ENCODE measurements at regions of chr3 and their contacts with region 1.

Region 1: GRCh38 chr3:51941798-51942602 is at the starts of genes PARP3 and RRP9:
- DNase-seq: peak; percentile 100
- H3K4me3 ChIP-seq: peak within 1 kb of the TSS; percentile 88
- H3K27ac ChIP-seq: peak within 1 kb of the TSS; percentile 90
- H3K27me3 ChIP-seq: no peaks in the 10 kb centered on the region
- CTCF ChIP-seq: peak; percentile 98
- polyA plus RNA-seq, gene PARP3: 7.5 and 10.4 TPM in 2 replicates
- polyA plus RNA-seq, gene RRP9: 10.8 and 13.7 TPM in 2 replicates

Region 2: DNA sequence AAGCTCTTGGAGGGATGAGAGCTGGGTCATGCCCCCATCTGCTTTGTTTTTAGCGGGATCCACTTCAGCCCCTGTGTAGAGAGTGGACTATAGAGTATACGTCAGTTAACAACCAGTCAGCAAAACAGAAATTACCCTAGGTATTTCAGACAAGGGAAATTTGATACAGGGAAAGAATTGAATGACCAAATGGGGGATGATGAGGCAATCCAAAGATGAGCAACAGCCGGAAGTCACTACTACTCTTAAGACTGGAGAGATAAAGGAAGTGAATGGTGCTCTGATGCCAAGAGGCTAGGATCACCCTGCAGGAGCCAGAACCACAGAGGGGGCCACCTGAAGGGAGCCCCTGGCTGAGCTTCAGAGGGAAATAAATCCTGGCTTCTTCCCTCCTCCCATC is 11.4 kb after region 1 on chr3:
- CTCF ChIA-PET with region 1: interaction called, 37 read pairs
- POLR2A ChIA-PET with region 1: interaction called, 4 read pairs
- DNase-seq: peak; percentile 49
- H3K4me3 ChIP-seq: no peak overlapping the region
- H3K27ac ChIP-seq: peak overlapping the region; percentile 31
- H3K27me3 ChIP-seq: no peaks in the 10 kb centered on the region
- CTCF ChIP-seq: no peak

Region 3: DNA sequence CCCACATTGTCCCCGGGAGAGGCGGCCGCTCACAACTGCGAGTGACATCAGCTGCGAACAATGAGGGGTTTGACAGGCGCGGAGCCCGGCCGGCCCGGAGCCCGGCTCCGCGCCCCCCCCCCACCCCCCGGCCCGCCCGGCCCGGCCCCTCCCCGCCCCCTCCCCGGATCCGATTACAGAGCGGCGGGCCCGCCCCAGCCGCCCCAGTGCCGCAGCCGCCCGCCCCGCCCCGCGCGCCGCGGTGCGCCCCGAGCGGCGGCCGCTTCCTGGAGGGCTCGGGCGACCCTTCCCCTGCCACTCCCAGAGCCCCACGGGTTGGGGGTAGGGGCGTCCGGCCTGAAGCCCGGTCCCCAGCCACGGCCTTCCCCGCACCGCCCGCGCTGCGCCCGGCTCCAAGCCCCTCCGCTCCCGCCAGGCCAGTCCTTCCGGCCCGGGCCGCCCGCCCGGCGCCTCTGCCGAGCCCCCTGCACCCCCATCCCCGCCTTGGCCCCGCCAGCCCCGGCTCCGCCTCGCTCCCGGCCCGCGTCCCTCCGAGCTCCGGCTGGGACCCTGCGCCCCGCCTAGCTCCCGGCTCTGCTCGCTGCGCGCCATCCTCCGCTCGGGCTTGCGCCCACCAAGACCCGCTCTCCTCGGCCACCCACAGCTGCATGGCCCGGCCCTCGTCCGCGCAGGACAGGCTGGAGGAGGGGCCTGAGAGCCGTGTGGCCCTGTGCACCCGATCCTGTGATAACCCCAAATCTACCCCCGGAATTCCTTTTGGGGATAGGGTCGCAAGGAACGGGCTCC is 25.6 kb after region 1 on chr3 and contains the start of gene PCBP4:
- CTCF ChIA-PET with region 1: interaction called, 24 read pairs
- POLR2A ChIA-PET with region 1: interaction called, 4 read pairs
- DNase-seq: no peak
- H3K4me3 ChIP-seq: peak within 1 kb of the TSS; percentile 78
- H3K27ac ChIP-seq: peak within 1 kb of the TSS; percentile 61
- H3K27me3 ChIP-seq: no peaks in the 10 kb centered on the region
- CTCF ChIP-seq: no peak
- polyA plus RNA-seq, gene PCBP4: 54.6 and 69.2 TPM in 2 replicates

Region 4: DNA sequence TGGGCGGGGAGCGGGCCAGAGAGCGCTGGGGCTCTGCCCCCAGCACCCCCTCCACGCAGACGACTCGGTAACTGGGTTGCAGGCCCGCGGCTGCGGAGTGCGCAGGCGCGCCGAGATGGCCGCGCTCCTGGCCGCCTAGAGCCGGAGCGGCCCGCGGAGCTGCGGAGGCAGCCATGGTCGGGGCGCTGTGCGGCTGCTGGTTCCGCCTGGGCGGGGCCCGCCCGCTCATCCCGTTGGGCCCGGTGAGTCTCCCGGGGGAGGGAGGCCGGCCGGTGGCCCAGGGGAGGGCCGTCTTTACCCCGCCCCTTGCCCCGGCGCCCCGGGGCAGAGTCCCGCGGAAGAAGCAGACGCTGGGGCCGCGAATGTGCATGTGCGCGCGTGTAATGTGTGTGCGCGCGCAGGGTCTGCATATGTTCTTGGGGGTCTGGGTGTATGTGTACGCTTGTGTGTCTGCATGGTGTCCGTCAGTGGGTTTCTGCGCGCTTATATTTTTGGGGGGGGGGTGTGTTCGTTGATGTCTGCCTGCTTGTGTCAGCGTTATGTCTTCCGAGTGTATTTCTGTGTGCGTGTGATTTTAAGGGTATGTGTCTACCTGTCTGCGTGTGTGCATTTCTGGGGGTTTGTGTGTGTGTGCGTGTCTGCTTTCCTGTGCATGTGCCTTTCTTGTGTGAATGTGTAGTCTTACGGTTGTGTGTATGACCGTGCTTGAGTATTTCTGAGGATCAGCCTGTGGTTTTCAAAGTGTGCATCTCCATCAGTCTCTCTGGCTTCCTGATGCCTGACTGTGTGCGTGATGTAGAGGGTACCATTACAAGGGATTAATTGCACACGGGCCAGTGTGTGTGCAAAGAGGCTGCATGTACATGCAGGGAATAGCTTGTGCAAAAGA is 33.2 kb after region 1 on chr3 and contains the start of gene ABHD14A:
- CTCF ChIA-PET with region 1: interaction called, 34 read pairs
- POLR2A ChIA-PET with region 1: interaction called, 20 read pairs
- DNase-seq: no peak
- H3K4me3 ChIP-seq: peak within 1 kb of the TSS; percentile 91
- H3K27ac ChIP-seq: peak within 1 kb of the TSS; percentile 47
- H3K27me3 ChIP-seq: no peaks in the 10 kb centered on the region
- CTCF ChIP-seq: no peak
- polyA plus RNA-seq, gene ABHD14A: 8.2 and 9.9 TPM in 2 replicates

Region 5: GRCh38 chr3:51982782-51983577 is 41.0 kb after region 1 on chr3 and contains the start of gene ACY1:
- CTCF ChIA-PET with region 1: interaction called, 24 read pairs
- POLR2A ChIA-PET with region 1: interaction called, 9 read pairs
- DNase-seq: peak; percentile 68
- H3K4me3 ChIP-seq: peak within 1 kb of the TSS; percentile 73
- H3K27ac ChIP-seq: peak within 1 kb of the TSS; percentile 95
- H3K27me3 ChIP-seq: no peaks in the 10 kb centered on the region
- CTCF ChIP-seq: no peak
- polyA plus RNA-seq, gene ACY1: 20.4 and 27.8 TPM in 2 replicates

Measured in AG04450 (cell line).